Common myeloid progenitor, CD34-positive (primary cell): ENCODE measurements at regions of chr20 and their contacts with region 1.

Region 1: GRCh38 chr20:54207743-54208547 is at the start of gene PFDN4:
- DNase-seq: peak; percentile 82 to 88 (median 88)
- H3K4me3 ChIP-seq: peak within 1 kb of the TSS; percentile 86 to 100 (median 92)
- H3K27ac ChIP-seq: peak within 1 kb of the TSS; percentile 100
- H3K4me1 ChIP-seq: peaks cover 6 to 30% (median 24%) of the 10 kb centered on the region in 4 experiments
- H3K27me3 ChIP-seq: no peaks in the 10 kb centered on the region

Region 2: GRCh38 chr20:54093423-54094267 is 114.3 kb before region 1 on chr20:
- CTCF ChIA-PET with region 1: interaction called, 183 read pairs
- POLR2A ChIA-PET with region 1: interaction called, 3 read pairs
- DNase-seq: no peak
- H3K4me3 ChIP-seq: no peak overlapping the region
- H3K27ac ChIP-seq: no peak overlapping the region
- H3K4me1 ChIP-seq: peaks cover 0 to 9% (median 5%) of the 10 kb centered on the region in 4 experiments
- H3K27me3 ChIP-seq: no peaks in the 10 kb centered on the region

Region 3: DNA sequence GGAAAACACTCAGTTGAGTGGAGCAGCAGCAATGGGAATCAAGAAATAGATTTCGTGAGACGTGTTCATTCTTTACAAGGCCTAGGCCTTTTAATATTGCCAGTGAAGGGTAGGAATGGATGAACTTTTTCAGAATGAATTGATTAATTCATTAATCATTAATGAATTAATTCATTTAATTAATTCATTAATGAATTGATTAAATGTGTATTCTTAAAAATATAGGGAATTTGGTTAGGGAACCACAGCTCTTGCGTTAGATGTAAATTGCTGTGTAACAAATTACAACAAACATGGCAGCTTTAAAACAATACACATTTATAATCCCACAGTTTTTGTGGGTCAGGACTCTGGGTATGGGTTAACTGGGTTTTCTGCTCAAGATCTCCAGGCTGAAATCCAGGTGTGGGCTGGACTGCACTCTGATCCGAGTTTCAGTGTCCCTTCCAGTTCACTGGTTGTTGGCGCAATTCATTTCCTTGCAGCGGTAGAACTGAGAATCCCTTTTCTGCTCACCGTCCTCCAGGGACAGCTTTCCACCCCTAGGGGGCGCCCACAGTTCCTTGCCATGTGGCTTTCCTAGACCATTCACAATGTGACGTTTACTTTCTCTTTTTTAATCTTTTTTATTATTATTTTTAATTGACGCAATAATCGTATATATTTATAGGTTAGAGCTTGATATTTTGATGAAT is 104.7 kb before region 1 on chr20:
- CTCF ChIA-PET with region 1: interaction called, 183 read pairs
- POLR2A ChIA-PET with region 1: interaction called, 3 read pairs
- DNase-seq: peak; percentile 61 to 80 (median 76)
- H3K4me3 ChIP-seq: no peak overlapping the region
- H3K27ac ChIP-seq: no peak overlapping the region
- H3K4me1 ChIP-seq: peaks cover 0 to 4% (median 0%) of the 10 kb centered on the region in 4 experiments
- H3K27me3 ChIP-seq: no peaks in the 10 kb centered on the region

Region 4: DNA sequence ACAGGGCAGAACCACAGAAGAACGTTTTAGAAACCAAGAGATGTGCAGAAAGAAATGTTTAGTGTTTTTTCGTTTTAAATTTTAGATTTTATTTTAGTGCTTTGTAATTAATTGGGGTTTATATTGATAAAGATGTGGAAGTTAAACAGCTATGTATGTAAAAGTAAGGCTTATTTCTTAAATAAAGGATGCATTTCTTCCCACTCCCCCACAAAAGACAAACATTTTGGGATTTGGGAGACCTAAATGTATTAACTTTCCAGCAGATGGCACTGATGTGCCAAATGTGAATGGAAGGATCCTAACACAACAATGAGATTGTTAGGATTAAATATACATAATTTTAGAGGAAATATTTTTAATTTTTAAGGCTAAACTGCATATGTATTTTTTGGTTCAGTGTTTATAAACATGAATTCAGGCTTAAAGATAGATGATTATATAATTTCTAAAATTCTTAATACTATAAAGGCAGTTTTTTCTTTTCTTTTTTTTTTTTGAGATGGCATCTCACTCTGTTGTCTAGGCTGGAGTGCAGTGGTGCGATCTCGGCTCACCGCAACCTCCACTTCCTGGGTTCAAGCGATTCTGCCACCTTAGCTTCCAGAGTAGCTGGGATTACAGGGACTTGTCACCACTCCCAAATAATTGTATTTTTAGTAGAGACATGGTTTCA is 11.9 kb after region 1 on chr20:
- CTCF ChIA-PET with region 1: interaction called, 14 read pairs
- POLR2A ChIA-PET with region 1: no interaction called
- DNase-seq: peak in 2 of 3 donors; percentile 36 to 46
- H3K4me3 ChIP-seq: no peak overlapping the region
- H3K27ac ChIP-seq: no peak overlapping the region
- H3K4me1 ChIP-seq: peaks cover 0 to 17% (median 6%) of the 10 kb centered on the region in 4 experiments
- H3K27me3 ChIP-seq: no peaks in the 10 kb centered on the region

Region 5: DNA sequence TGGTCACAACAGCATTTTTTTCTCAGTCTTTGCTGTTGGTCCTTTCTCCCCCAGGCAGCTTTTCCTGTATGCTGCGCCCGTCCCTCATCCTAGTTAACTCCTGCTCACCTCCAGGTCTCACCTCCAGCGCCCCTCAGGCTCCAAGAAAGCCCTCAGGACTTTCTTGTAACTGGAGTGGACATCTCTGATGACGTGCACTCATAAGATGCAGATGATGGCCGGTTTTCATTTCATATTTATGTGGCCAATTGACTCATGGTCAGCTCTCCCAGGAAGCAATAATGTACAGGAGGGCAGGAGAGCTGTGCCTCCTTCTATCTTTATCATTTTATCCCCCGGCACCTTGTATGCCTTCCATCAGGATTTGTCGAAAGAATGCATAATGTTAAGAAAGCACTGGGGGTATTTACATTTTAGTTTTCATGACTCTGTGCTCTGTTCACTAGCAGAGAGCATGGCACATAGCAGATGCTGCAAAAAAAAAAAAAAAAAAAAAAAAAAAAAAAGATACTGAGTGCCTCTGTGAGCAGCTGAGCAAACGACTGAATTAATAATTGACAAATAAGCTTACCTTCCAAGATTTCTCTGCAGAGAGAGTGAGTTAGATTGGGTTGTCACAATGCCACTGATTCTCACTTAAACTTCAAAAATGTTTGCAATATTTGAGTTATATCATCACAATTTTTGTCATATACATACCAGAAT is 437.7 kb after region 1 on chr20:
- CTCF ChIA-PET with region 1: interaction called, 19 read pairs
- POLR2A ChIA-PET with region 1: no interaction called
- DNase-seq: no peak
- H3K4me3 ChIP-seq: no peak overlapping the region
- H3K27ac ChIP-seq: no peak overlapping the region
- H3K4me1 ChIP-seq: no peaks in the 10 kb centered on the region
- H3K27me3 ChIP-seq: no peaks in the 10 kb centered on the region